T-cell (primary cell): ENCODE measurements at regions of chr4 and their contacts with region 1.

Region 1: GRCh38 chr4:19014594-19014993 is 993.0 kb upstream of the LCORL start:
- DNase-seq: no peak
- ATAC-seq: no peak
- H3K4me3 ChIP-seq: no peak overlapping the region
- H3K4me3 Mint-ChIP-seq: no peak overlapping the region
- H3K27ac ChIP-seq: no peak overlapping the region
- H3K27ac Mint-ChIP-seq: no peak overlapping the region
- H3K4me1 ChIP-seq: no peaks in the 10 kb centered on the region
- H3K4me1 Mint-ChIP-seq: no peaks in the 10 kb centered on the region
- H3K27me3 ChIP-seq: no peaks in the 10 kb centered on the region
- H3K27me3 Mint-ChIP-seq: no peaks in the 10 kb centered on the region

Region 2: GRCh38 chr4:19540859-19541540 is 526.4 kb after region 1 on chr4:
- CTCF ChIA-PET with region 1: no interaction called
- POLR2A ChIA-PET with region 1: interaction called in 1 of 2 experiments, 14 read pairs
- DNase-seq: no peak
- ATAC-seq: no peak
- H3K4me3 ChIP-seq: no peak overlapping the region
- H3K4me3 Mint-ChIP-seq: no peak overlapping the region
- H3K27ac ChIP-seq: no peak overlapping the region
- H3K27ac Mint-ChIP-seq: no peak overlapping the region
- H3K4me1 ChIP-seq: no peaks in the 10 kb centered on the region
- H3K4me1 Mint-ChIP-seq: no peaks in the 10 kb centered on the region
- H3K27me3 ChIP-seq: no peaks in the 10 kb centered on the region
- H3K27me3 Mint-ChIP-seq: no peaks in the 10 kb centered on the region